ENCODE measurements at regions of chr5 and their contacts with region 1.

Region 1: GRCh38 chr5:35651002-35651756 is 33.5 kb downstream of the SPEF2 start:
- DNase-seq: peak; percentile 74
- H3K4me3 Mint-ChIP-seq: no peak overlapping the region
- H3K27ac Mint-ChIP-seq: no peak overlapping the region
- H3K4me1 Mint-ChIP-seq: peaks cover 10% of the 10 kb centered on the region
- H3K27me3 Mint-ChIP-seq: no peaks in the 10 kb centered on the region

Region 2: GRCh38 chr5:35393901-35394300 is 257.3 kb before region 1 on chr5:
- CTCF ChIA-PET with region 1: no interaction called
- POLR2A ChIA-PET with region 1: no interaction called
- intact Hi-C with region 1: no loop called
- DNase-seq: no peak
- H3K4me3 Mint-ChIP-seq: no peak overlapping the region
- H3K27ac Mint-ChIP-seq: no peak overlapping the region
- H3K4me1 Mint-ChIP-seq: no peaks in the 10 kb centered on the region
- H3K27me3 Mint-ChIP-seq: peaks cover 2% of the 10 kb centered on the region

Region 3: GRCh38 chr5:35626108-35626507 is 25.1 kb before region 1 on chr5:
- CTCF ChIA-PET with region 1: interaction called, 17 read pairs
- POLR2A ChIA-PET with region 1: no interaction called
- intact Hi-C with region 1: no loop called
- DNase-seq: no peak
- H3K4me3 Mint-ChIP-seq: no peak overlapping the region
- H3K27ac Mint-ChIP-seq: no peak overlapping the region
- H3K4me1 Mint-ChIP-seq: peaks cover 30% of the 10 kb centered on the region
- H3K27me3 Mint-ChIP-seq: no peaks in the 10 kb centered on the region

Region 4: GRCh38 chr5:35665096-35665495 is 13.9 kb after region 1 on chr5:
- CTCF ChIA-PET with region 1: interaction called, 47 read pairs
- POLR2A ChIA-PET with region 1: no interaction called
- intact Hi-C with region 1: no loop called
- DNase-seq: no peak
- H3K4me3 Mint-ChIP-seq: no peak overlapping the region
- H3K27ac Mint-ChIP-seq: no peak overlapping the region
- H3K4me1 Mint-ChIP-seq: peaks cover 37% of the 10 kb centered on the region
- H3K27me3 Mint-ChIP-seq: no peaks in the 10 kb centered on the region

Region 5: DNA sequence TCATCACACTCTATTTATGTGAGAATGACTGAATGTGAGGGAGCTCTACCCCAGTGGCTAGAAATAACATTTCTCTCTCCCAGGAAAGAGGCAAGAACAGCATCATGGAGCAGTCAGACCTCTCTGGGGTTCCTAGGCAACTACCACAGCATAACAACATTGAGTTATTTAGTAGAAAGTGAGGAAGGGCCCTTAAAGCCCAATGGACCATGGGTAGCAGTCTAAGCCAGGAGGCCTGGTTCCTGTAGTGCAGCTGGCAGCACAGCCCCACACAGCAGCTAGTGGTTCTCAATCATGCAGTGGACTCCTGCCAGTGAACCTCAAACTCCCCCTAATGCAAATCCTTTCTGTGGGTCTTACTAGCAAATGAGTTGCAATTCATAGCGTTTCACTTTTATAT is 21.8 kb after region 1 on chr5:
- CTCF ChIA-PET with region 1: interaction called, 12 read pairs
- POLR2A ChIA-PET with region 1: no interaction called
- intact Hi-C with region 1: loop called (anchors 1 kb)
- DNase-seq: peak; percentile 66
- H3K4me3 Mint-ChIP-seq: no peak overlapping the region
- H3K27ac Mint-ChIP-seq: peak overlapping the region; percentile 69
- H3K4me1 Mint-ChIP-seq: peaks cover 60% of the 10 kb centered on the region
- H3K27me3 Mint-ChIP-seq: no peaks in the 10 kb centered on the region

Region 6: DNA sequence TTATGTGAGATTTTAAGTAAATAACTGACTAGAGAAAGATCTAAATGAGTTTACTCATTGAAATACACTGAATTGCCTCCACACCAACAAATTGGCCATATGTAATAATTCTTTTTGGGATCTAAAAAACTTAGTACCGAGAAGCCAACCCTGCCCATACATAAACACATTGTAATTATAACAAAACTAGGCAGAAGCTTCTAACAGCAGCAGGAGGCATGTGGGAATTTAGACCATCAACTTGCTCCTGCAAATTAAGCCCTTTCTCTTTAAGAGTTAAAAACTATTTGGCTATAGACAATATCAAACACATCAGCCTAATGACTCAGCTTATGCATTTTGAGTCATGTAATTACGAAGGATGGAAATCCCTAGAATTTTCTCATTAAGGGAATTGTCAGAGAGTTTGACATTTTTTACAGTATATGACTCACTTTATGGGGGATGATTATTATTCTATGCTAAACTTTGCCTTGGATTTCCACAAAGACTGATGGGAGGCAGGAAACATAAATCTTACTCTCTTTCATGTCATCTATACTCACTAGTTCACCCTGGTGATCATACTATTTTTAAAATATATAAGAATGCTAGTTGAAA is 206.5 kb after region 1 on chr5:
- CTCF ChIA-PET with region 1: interaction called, 17 read pairs
- POLR2A ChIA-PET with region 1: interaction called, 5 read pairs
- intact Hi-C with region 1: loop called (anchors 2 kb)
- DNase-seq: no peak
- H3K4me3 Mint-ChIP-seq: peak overlapping the region; percentile 93
- H3K27ac Mint-ChIP-seq: peak overlapping the region; percentile 100
- H3K4me1 Mint-ChIP-seq: peaks cover 76% of the 10 kb centered on the region
- H3K27me3 Mint-ChIP-seq: no peaks in the 10 kb centered on the region

Region 7: DNA sequence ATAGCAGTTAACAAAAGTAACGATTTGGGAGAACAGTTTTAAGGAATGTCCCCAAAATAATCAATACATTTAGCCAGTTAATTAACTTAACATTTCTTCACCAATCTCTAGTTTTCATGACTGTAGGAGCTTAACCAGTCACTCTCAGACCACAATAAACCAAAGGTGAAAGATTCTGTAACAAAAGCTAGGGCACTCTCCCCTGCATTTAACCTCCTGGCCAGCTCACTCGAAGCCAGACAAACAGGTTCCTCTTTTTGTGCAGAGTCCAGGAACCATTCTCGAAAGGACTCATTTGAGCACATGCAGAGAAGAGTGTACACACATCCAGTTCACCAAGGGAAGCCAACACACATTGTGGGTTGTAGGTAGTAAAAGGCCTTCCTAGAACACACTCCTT is 212.0 kb after region 1 on chr5:
- CTCF ChIA-PET with region 1: interaction called, 17 read pairs
- POLR2A ChIA-PET with region 1: interaction called, 5 read pairs
- intact Hi-C with region 1: no loop called
- DNase-seq: peak; percentile 59
- H3K4me3 Mint-ChIP-seq: peak overlapping the region; percentile 78
- H3K27ac Mint-ChIP-seq: peak overlapping the region; percentile 95
- H3K4me1 Mint-ChIP-seq: peaks cover 78% of the 10 kb centered on the region
- H3K27me3 Mint-ChIP-seq: no peaks in the 10 kb centered on the region